T-cell (primary cell): ENCODE measurements at regions of chr2 and their contacts with region 1.

Region 1: DNA sequence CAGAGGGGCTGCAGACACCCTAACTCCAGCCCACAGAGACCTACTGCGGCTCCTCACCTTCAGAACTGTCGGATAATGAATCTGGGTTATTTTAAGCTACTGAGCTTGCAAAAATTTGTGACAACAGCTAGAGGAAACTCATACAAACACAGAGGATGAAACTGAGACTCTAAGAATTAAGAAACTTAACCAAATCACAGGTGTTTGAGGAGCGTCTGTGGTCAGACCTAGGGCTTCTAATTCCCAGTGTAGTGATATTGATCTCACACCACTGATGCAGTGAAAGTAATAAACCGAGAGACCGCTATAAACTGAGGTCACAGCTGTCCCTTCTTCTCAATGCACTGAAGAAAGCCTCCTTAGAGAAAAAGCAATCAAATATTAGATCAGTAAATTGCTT is 110.1 kb downstream of the RGPD3 start:
- DNase-seq: no peak
- ATAC-seq: no peak
- H3K4me3 ChIP-seq: no peak overlapping the region
- H3K4me3 Mint-ChIP-seq: no peak overlapping the region
- H3K27ac ChIP-seq: no peak overlapping the region
- H3K27ac Mint-ChIP-seq: no peak overlapping the region
- H3K4me1 ChIP-seq: no peaks in the 10 kb centered on the region
- H3K4me1 Mint-ChIP-seq: no peaks in the 10 kb centered on the region
- H3K27me3 ChIP-seq: peaks cover 0 to 3% of the 10 kb centered on the region in 2 experiments
- H3K27me3 Mint-ChIP-seq: peaks cover 12 to 18% of the 10 kb centered on the region in 2 donors

Region 2: DNA sequence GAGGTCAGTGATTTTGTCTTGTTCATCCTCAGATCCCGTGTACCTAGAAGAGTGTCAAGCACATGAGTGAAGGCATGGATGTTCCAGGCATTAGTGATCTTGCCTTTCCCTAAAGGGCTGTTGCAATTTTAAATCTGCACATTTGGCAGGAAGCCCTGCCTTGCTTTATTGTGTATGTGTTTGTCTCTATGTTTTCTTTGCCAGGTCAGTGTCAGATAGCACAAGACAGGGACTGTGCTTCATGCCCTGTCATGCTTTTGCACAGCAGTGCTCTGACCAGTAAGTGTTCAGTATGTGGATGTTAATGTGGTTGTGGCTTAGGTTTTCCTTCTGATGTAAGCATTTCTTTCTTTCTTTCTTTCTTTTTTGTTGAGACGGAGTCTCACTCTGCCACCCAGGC is 21.3 kb before region 1 on chr2:
- CTCF ChIA-PET with region 1: interaction called in 1 of 2 experiments, 10 read pairs
- POLR2A ChIA-PET with region 1: no interaction called
- DNase-seq: no peak
- ATAC-seq: no peak
- H3K4me3 ChIP-seq: no peak overlapping the region
- H3K4me3 Mint-ChIP-seq: no peak overlapping the region
- H3K27ac ChIP-seq: no peak overlapping the region
- H3K27ac Mint-ChIP-seq: no peak overlapping the region
- H3K4me1 ChIP-seq: no peaks in the 10 kb centered on the region
- H3K4me1 Mint-ChIP-seq: peaks cover 0 to 12% (median 10%) of the 10 kb centered on the region in 3 donors
- H3K27me3 ChIP-seq: no peaks in the 10 kb centered on the region
- H3K27me3 Mint-ChIP-seq: no peaks in the 10 kb centered on the region